ENCODE measurements at regions of chr4 and their contacts with region 1.

Region 1: DNA sequence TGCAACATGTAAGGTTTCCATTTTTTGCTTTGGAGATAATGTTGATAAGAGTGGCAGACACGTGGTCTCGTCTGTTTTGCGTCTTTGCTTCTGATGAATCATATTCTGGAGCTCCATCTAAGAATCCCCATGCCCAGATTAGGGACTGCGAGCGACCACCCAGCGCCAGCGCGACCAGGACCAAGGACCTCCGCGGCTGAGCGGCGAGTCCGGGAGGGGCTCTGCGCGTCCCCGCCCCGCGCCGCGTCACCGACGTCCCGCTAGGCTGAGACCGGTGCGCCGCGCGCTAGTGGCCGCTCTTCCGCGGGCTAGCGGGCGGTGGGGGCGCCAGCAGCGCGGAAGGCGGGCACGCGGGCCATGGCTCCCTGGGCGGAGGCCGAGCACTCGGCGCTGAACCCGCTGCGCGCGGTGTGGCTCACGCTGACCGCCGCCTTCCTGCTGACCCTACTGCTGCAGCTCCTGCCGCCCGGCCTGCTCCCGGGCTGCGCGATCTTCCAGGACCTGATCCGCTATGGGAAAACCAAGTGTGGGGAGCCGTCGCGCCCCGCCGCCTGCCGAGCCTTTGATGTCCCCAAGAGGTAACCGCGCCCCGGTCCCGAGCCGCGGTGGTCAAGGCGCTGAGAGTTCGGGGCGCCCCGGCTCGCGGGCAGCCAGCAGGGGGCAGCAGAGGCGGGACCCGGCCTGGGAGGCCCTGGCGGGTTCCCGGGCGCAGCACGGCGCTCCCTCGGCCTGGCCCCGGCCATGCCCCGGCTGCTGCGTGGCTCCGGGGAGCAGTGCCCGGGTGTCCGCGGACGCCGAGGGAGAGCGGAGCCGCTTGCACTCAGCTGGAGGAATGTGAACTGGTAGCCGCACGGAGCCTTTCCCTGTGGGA is at the start of gene SRD5A3:
- DNase-seq: peak; percentile 19
- ATAC-seq: peak; percentile 98
- H3K4me3 ChIP-seq: peak within 1 kb of the TSS; percentile 76
- H3K27ac ChIP-seq: peak within 1 kb of the TSS; percentile 48
- H3K4me1 ChIP-seq: no peaks in the 10 kb centered on the region
- H3K27me3 ChIP-seq: no peaks in the 10 kb centered on the region
- CTCF ChIP-seq: peak; percentile 77 to 86 (median 84)
- EP300 ChIP-seq: no peak
- POLR2A ChIP-seq: peak; percentile 87
- RAD21 ChIP-seq: peak; percentile 74
- polyA plus RNA-seq, gene SRD5A3: 1.6 to 4.5 TPM

Region 2: DNA sequence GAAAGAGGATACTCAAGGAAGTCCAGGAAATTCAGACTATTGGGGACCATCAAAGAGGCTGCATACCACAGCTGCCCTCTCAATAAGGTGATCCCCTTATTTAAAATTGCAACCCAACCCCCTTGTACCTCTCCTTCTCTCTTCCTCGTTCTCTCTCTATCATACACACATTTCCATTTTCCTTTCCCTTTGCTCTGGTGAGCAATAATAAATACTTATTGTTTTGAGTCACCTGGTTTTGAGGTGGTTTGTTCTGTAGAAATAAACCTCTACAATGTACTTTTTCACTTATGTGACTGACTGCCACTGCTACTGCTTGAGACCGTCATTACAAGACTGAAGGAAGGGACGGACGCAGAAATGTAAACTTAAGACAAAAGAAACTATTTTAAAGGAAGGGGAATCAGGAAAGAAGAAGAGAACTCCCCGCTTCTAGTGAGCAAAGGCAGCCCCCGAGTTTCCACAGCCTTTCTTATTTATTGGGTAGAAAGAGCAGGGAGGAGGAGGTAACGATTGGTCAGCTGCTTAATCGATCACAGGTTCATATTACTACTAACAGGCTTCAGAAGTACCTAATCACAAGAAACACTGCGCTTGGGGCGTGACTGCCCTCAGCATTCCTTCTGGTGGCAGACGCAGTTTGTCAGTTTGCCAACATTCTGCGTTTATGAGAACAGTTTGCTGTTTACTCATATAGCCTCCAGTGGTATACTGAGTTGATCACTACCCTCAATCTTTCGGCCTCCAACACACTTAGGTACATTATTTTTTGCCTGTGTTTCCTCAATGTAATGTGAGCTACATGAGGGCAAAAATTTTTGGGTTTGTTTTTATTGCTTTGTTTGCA is 32.6 kb after region 1 on chr4:
- CTCF ChIA-PET with region 1: no interaction called
- POLR2A ChIA-PET with region 1: no interaction called
- RAD21 ChIA-PET with region 1: no interaction called
- SMC1A ChIA-PET with region 1: no interaction called
- in situ Hi-C with region 1: no loop called
- intact Hi-C with region 1: no loop called
- DNase-seq: no peak
- ATAC-seq: no peak
- H3K4me3 ChIP-seq: no peak overlapping the region
- H3K27ac ChIP-seq: no peak overlapping the region
- H3K4me1 ChIP-seq: no peaks in the 10 kb centered on the region
- H3K27me3 ChIP-seq: no peaks in the 10 kb centered on the region; a peak in 1 of 4 replicates
- CTCF ChIP-seq: no peak
- EP300 ChIP-seq: no peak
- POLR2A ChIP-seq: no peak
- RAD21 ChIP-seq: no peak

Region 3: GRCh38 chr4:55395529-55396307 is 49.5 kb after region 1 on chr4 and contains the start of gene TMEM165:
- CTCF ChIA-PET with region 1: interaction called, 9 read pairs
- POLR2A ChIA-PET with region 1: interaction called, 6 read pairs
- RAD21 ChIA-PET with region 1: interaction called, 5 read pairs
- SMC1A ChIA-PET with region 1: interaction called, 12 read pairs
- in situ Hi-C with region 1: no loop called
- intact Hi-C with region 1: loop called (anchors 5 kb)
- DNase-seq: peak; percentile 41
- ATAC-seq: peak; percentile 94
- H3K4me3 ChIP-seq: peak within 1 kb of the TSS; percentile 88
- H3K27ac ChIP-seq: peak within 1 kb of the TSS; percentile 91
- H3K4me1 ChIP-seq: peaks cover 3% of the 10 kb centered on the region; the same call in 1 of the 2 replicates
- H3K27me3 ChIP-seq: no peaks in the 10 kb centered on the region
- CTCF ChIP-seq: no peak
- EP300 ChIP-seq: no peak
- POLR2A ChIP-seq: peak; percentile 99
- RAD21 ChIP-seq: no peak
- polyA plus RNA-seq, gene TMEM165: 18.3 to 32.5 TPM

Region 4: DNA sequence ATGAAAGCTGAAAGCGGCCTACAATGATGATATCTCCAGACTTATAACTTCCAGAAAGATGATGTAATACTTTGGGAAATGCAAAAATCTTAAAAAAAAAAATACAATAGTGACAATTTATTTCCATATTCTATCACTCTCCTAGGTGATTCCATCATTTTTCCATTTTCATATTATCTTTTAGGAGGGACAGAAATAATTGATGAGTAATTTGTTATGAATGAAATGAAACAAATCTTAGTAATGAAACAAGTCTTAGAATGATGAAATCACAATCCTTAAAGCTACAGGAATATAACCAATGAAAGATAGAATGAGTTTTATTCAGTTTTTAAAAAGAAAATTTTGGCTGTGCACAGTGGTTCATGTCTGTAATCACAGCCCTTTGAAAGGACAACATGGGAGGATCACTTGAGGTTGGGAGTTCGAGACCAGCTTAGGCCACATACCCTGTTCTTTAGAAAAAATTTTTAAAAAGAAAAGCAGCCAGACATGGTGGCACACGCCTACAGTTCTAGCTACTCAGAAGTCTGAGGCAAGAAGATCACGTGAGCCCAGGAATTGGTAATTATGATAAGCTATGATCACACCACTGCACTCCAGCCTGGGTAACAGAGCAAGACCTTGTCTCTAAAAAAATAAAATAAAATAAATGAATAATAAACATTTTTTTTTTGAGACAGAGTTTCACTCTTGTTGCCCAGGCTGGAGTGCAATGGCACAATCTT is 178.8 kb after region 1 on chr4:
- CTCF ChIA-PET with region 1: no interaction called
- POLR2A ChIA-PET with region 1: no interaction called
- RAD21 ChIA-PET with region 1: no interaction called
- SMC1A ChIA-PET with region 1: no interaction called
- in situ Hi-C with region 1: no loop called
- intact Hi-C with region 1: no loop called
- DNase-seq: no peak
- ATAC-seq: no peak
- H3K4me3 ChIP-seq: no peak overlapping the region
- H3K27ac ChIP-seq: no peak overlapping the region
- H3K4me1 ChIP-seq: no peaks in the 10 kb centered on the region
- H3K27me3 ChIP-seq: no peaks in the 10 kb centered on the region
- CTCF ChIP-seq: no peak
- EP300 ChIP-seq: no peak
- POLR2A ChIP-seq: no peak
- RAD21 ChIP-seq: no peak

Region 5: GRCh38 chr4:55554453-55555030 is 208.3 kb after region 1 on chr4:
- CTCF ChIA-PET with region 1: interaction called, 8 read pairs
- POLR2A ChIA-PET with region 1: interaction called, 4 read pairs
- RAD21 ChIA-PET with region 1: interaction called, 7 read pairs
- SMC1A ChIA-PET with region 1: interaction called, 5 read pairs
- in situ Hi-C with region 1: loop called (anchors 10 kb)
- intact Hi-C with region 1: loop called (anchors 1 kb)
- DNase-seq: no peak
- ATAC-seq: peak; percentile 70
- H3K4me3 ChIP-seq: no peak overlapping the region
- H3K27ac ChIP-seq: no peak overlapping the region
- H3K4me1 ChIP-seq: no peaks in the 10 kb centered on the region
- H3K27me3 ChIP-seq: no peaks in the 10 kb centered on the region
- CTCF ChIP-seq: peak; percentile 31 to 47 (median 33); a peak in 4 of 6 replicates
- EP300 ChIP-seq: no peak
- POLR2A ChIP-seq: no peak
- RAD21 ChIP-seq: peak; percentile 63

Region 6: GRCh38 chr4:55736605-55737183 is 390.5 kb after region 1 on chr4:
- CTCF ChIA-PET with region 1: interaction called, 9 read pairs
- POLR2A ChIA-PET with region 1: no interaction called
- RAD21 ChIA-PET with region 1: no interaction called
- SMC1A ChIA-PET with region 1: interaction called, 3 read pairs
- in situ Hi-C with region 1: loop called (anchors 10 kb)
- intact Hi-C with region 1: loop called (anchors 1 kb)
- DNase-seq: no peak
- ATAC-seq: no peak
- H3K4me3 ChIP-seq: no peak overlapping the region
- H3K27ac ChIP-seq: no peak overlapping the region
- H3K4me1 ChIP-seq: no peaks in the 10 kb centered on the region
- H3K27me3 ChIP-seq: no peaks in the 10 kb centered on the region
- CTCF ChIP-seq: peak in 2 of 3 experiments; percentile 29 to 39; a peak in 2 of 6 replicates
- EP300 ChIP-seq: no peak
- POLR2A ChIP-seq: no peak
- RAD21 ChIP-seq: peak; percentile 51; the same call in 1 of the 2 replicates

Region 7: DNA sequence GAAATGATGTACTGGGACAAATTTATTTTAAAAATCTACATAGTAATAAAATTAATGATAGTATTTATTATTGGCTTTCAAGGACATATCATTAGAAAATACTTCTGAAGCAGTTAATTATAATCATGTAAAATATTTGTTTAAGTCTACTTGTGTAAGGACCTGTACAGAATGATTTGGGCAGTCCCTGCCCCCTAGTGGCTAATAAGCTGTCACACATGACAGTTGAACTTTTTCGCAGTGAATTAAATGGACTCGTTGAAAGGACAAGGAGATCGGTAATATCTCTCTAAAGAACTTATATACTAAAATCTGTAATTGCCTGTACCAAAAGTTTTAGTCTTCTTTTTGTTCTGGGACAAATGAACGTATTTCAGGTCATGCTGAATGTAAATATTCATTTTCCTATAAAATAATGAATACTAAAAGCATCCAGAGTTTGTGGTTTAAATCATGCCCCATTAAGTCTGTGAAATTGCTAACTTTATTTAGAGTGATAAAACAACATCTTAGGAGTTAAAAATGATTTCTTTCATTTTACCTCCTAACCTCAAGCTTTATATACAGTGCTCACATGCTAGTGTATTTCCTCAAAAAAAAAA is 520.9 kb after region 1 on chr4:
- CTCF ChIA-PET with region 1: interaction called, 18 read pairs
- POLR2A ChIA-PET with region 1: no interaction called
- RAD21 ChIA-PET with region 1: interaction called, 5 read pairs
- SMC1A ChIA-PET with region 1: interaction called, 4 read pairs
- in situ Hi-C with region 1: no loop called
- intact Hi-C with region 1: loop called (anchors 5 kb)
- DNase-seq: peak; percentile 38
- ATAC-seq: peak; percentile 98
- H3K4me3 ChIP-seq: no peak overlapping the region
- H3K27ac ChIP-seq: peak overlapping the region; percentile 31; the same call in 1 of the 2 replicates
- H3K4me1 ChIP-seq: peaks cover 7% of the 10 kb centered on the region; the same call in 1 of the 2 replicates
- H3K27me3 ChIP-seq: no peaks in the 10 kb centered on the region
- CTCF ChIP-seq: peak; percentile 70 to 77 (median 77); a peak in 5 of 6 replicates
- EP300 ChIP-seq: no peak
- POLR2A ChIP-seq: no peak
- RAD21 ChIP-seq: peak; percentile 80

Region 8: GRCh38 chr4:56301181-56302076 is 955.2 kb after region 1 on chr4:
- CTCF ChIA-PET with region 1: no interaction called
- POLR2A ChIA-PET with region 1: no interaction called
- RAD21 ChIA-PET with region 1: no interaction called
- SMC1A ChIA-PET with region 1: no interaction called
- in situ Hi-C with region 1: no loop called
- intact Hi-C with region 1: loop called (anchors 5 kb)
- DNase-seq: peak; percentile 43
- ATAC-seq: peak; percentile 99
- H3K4me3 ChIP-seq: no peak overlapping the region
- H3K27ac ChIP-seq: no peak overlapping the region
- H3K4me1 ChIP-seq: no peaks in the 10 kb centered on the region
- H3K27me3 ChIP-seq: no peaks in the 10 kb centered on the region
- CTCF ChIP-seq: peak; percentile 90 to 97 (median 90)
- EP300 ChIP-seq: no peak
- POLR2A ChIP-seq: no peak
- RAD21 ChIP-seq: peak; percentile 99

Measured in GM12878 (cell line).